CD8-positive, alpha-beta memory T cell (primary cell): ENCODE measurements at regions of chr19 and their contacts with region 1.

Region 1: DNA sequence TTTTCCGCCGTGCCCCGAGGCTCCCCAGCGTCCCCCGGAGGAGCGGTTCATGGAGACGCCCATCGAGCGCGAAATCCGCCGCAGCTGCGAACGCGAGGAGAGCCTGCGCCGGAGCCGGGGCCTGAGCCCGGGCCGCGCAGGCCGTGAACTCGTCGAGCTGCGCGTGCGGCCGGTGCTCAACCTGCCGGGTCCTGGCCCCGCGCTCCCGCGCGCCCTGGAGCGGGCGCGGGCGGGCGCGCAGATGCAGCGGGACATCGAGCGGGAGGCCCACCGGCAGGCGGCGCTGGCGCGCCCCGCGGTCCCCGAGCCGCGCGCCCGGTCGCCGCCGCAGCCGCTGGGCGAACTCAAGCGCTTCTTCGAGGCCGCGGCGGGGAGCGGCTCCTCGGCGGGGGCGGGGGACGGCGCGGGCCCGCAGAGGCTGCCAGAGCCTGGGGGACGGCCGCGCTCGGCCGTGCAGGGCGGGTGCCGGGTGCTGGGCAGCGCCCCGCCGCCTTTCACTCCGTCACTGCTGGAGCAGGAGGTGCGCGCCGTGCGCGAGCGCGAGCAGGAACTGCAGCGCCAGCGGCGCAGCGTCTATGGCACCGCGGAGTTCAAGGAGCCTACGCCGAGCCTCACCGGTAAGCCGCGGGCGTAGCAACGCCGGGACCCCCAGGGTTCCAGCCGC is 807 bp downstream of the MISP3 start:
- DNase-seq: peak; percentile 68 to 85 (median 80)
- H3K4me3 ChIP-seq: peak overlapping the region; percentile 73
- H3K4me3 Mint-ChIP-seq: peak overlapping the region; percentile 91 to 94 (median 93)
- H3K27ac ChIP-seq: peak overlapping the region; percentile 64
- H3K27ac Mint-ChIP-seq: peak overlapping the region in 7 of 8 donors; percentile 78 to 98 (median 88)
- H3K4me1 ChIP-seq: peaks cover 33% of the 10 kb centered on the region
- H3K4me1 Mint-ChIP-seq: peaks cover 7 to 29% (median 15%) of the 10 kb centered on the region in 3 donors
- H3K27me3 ChIP-seq: no peaks in the 10 kb centered on the region
- H3K27me3 Mint-ChIP-seq: no peaks in the 10 kb centered on the region

Region 2: GRCh38 chr19:13880059-13881043 is 193.0 kb before region 1 on chr19:
- CTCF ChIA-PET with region 1: interaction called, 28 read pairs
- POLR2A ChIA-PET with region 1: interaction called, 5 read pairs
- DNase-seq: peak; percentile 93 to 99 (median 98)
- H3K4me3 ChIP-seq: peak overlapping the region; percentile 52
- H3K4me3 Mint-ChIP-seq: peak overlapping the region; percentile 54 to 83 (median 72)
- H3K27ac ChIP-seq: peak overlapping the region; percentile 74
- H3K27ac Mint-ChIP-seq: peak overlapping the region in 7 of 8 donors; percentile 88 to 92 (median 91)
- H3K4me1 ChIP-seq: peaks cover 48% of the 10 kb centered on the region
- H3K4me1 Mint-ChIP-seq: peaks cover 33 to 49% (median 37%) of the 10 kb centered on the region in 3 donors
- H3K27me3 ChIP-seq: no peaks in the 10 kb centered on the region
- H3K27me3 Mint-ChIP-seq: no peaks in the 10 kb centered on the region

Region 3: DNA sequence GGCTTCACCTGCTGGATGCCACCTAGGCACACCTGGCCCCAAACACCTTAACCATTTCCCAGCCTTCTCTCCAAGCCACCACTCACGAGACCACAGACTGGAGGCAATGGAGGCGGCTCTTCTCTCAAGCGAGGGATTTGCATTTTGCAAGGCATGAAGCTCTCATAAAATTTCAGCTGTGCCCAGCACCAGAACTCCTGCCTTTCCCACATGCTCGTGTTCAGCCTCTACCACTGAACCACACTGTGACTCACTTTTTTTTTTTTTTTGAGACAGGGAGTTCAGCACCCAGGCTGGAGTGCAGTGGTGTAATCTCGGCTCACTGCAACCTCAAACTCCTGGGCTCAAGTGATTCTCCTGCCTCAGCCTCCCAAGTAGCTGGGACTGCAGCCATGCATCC is 185.9 kb before region 1 on chr19:
- CTCF ChIA-PET with region 1: interaction called, 28 read pairs
- POLR2A ChIA-PET with region 1: interaction called, 4 read pairs
- DNase-seq: peak in 1 of 5 donors; percentile 32
- H3K4me3 ChIP-seq: no peak overlapping the region
- H3K4me3 Mint-ChIP-seq: peak overlapping the region; percentile 21 to 78 (median 70)
- H3K27ac ChIP-seq: no peak overlapping the region
- H3K27ac Mint-ChIP-seq: peak overlapping the region; percentile 84 to 95 (median 92)
- H3K4me1 ChIP-seq: peaks cover 46% of the 10 kb centered on the region
- H3K4me1 Mint-ChIP-seq: peaks cover 24 to 50% (median 33%) of the 10 kb centered on the region in 3 donors
- H3K27me3 ChIP-seq: no peaks in the 10 kb centered on the region
- H3K27me3 Mint-ChIP-seq: no peaks in the 10 kb centered on the region

Region 4: GRCh38 chr19:14048443-14049153 is 24.8 kb before region 1 on chr19:
- CTCF ChIA-PET with region 1: interaction called, 11 read pairs
- POLR2A ChIA-PET with region 1: no interaction called
- DNase-seq: peak; percentile 51 to 82 (median 66)
- H3K4me3 ChIP-seq: no peak overlapping the region
- H3K4me3 Mint-ChIP-seq: no peak overlapping the region
- H3K27ac ChIP-seq: no peak overlapping the region
- H3K27ac Mint-ChIP-seq: peak overlapping the region; percentile 13 to 87 (median 76)
- H3K4me1 ChIP-seq: no peaks in the 10 kb centered on the region
- H3K4me1 Mint-ChIP-seq: peaks cover 0 to 9% (median 1%) of the 10 kb centered on the region in 3 donors
- H3K27me3 ChIP-seq: no peaks in the 10 kb centered on the region
- H3K27me3 Mint-ChIP-seq: no peaks in the 10 kb centered on the region

Region 5: DNA sequence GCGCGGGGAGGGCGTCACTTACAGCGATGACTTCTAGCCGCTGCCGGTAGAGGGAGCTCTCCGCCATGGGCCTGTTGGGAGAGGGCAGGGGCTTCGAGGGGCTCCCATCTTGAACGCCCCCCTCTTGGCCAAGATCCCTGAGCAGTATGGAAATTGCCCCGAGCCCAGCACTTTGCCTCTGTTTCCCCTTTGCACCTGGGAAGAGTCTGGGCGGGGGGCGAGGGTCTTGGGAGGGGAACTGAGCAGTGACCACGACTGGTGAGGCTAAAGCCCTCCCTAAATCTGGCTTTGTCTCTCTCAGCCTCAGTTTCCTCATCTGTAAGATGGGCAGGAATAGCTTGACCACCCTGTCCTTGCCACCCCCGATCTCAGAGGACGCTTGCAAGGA is 14.3 kb before region 1 on chr19:
- CTCF ChIA-PET with region 1: interaction called, 67 read pairs
- POLR2A ChIA-PET with region 1: no interaction called
- DNase-seq: peak; percentile 33 to 62 (median 43)
- H3K4me3 ChIP-seq: no peak overlapping the region
- H3K4me3 Mint-ChIP-seq: peak overlapping the region in 6 of 7 donors; percentile 31 to 78 (median 60)
- H3K27ac ChIP-seq: no peak overlapping the region
- H3K27ac Mint-ChIP-seq: peak overlapping the region in 2 of 8 donors; percentile 21 to 42
- H3K4me1 ChIP-seq: peaks cover 17% of the 10 kb centered on the region
- H3K4me1 Mint-ChIP-seq: peaks cover 11 to 25% (median 11%) of the 10 kb centered on the region in 3 donors
- H3K27me3 ChIP-seq: peaks cover 16% of the 10 kb centered on the region
- H3K27me3 Mint-ChIP-seq: peaks cover 18 to 36% of the 10 kb centered on the region in 2 donors

Region 6: DNA sequence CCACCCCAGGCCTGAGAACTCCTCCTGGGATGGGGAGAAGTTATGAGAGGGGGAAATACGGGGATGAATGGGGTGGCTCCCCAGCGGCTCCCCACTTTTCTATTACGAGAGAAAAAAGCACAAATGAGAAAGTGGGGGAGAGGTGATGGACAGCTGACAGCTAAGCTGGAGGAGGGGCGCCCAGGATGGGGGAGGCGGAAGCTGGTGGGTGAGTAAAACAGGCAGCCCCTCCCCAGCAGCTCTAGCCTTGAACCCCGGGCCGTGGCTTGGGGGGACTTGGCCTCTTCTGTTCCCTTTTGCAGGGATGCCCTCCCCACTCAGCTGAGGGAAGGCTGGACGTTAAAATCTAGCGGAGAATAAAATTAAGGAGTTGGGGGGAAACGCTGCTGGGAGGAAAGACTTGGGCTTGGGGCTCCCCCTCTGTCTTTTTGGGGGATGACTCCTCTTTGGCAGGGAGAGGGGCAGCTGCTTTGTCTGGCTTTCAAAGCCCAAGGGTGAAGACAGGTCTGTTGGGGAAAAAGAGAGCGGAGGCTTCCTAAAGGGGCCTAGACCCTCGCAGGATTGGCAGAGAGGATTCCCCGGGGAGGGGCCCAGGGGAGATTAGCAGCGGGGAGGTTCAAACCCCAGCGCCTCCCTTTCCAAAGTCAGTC is 18.5 kb after region 1 on chr19:
- CTCF ChIA-PET with region 1: interaction called, 6 read pairs
- POLR2A ChIA-PET with region 1: interaction called, 17 read pairs
- DNase-seq: peak in 1 of 5 donors; percentile 9
- H3K4me3 ChIP-seq: peak overlapping the region; percentile 89
- H3K4me3 Mint-ChIP-seq: peak overlapping the region; percentile 88 to 100 (median 99)
- H3K27ac ChIP-seq: peak overlapping the region; percentile 59
- H3K27ac Mint-ChIP-seq: peak overlapping the region; percentile 94 to 99 (median 98)
- H3K4me1 ChIP-seq: peaks cover 14% of the 10 kb centered on the region
- H3K4me1 Mint-ChIP-seq: peaks cover 10 to 24% (median 13%) of the 10 kb centered on the region in 3 donors
- H3K27me3 ChIP-seq: no peaks in the 10 kb centered on the region
- H3K27me3 Mint-ChIP-seq: peaks cover 0 to 4% of the 10 kb centered on the region in 2 donors

Region 7: GRCh38 chr19:14117668-14118164 is 44.3 kb after region 1 on chr19 and contains the start of gene PRKACA:
- CTCF ChIA-PET with region 1: interaction called, 28 read pairs
- POLR2A ChIA-PET with region 1: interaction called, 6 read pairs
- DNase-seq: peak; percentile 97 to 99 (median 99)
- H3K4me3 ChIP-seq: peak within 1 kb of the TSS; percentile 60
- H3K4me3 Mint-ChIP-seq: peak within 1 kb of the TSS; percentile 92 to 98 (median 96)
- H3K27ac ChIP-seq: peak within 1 kb of the TSS; percentile 85
- H3K27ac Mint-ChIP-seq: peak within 1 kb of the TSS; percentile 96 to 100 (median 99)
- H3K4me1 ChIP-seq: peaks cover 34% of the 10 kb centered on the region
- H3K4me1 Mint-ChIP-seq: peaks cover 35 to 52% (median 35%) of the 10 kb centered on the region in 3 donors
- H3K27me3 ChIP-seq: no peaks in the 10 kb centered on the region
- H3K27me3 Mint-ChIP-seq: peaks cover 0 to 4% of the 10 kb centered on the region in 2 donors
- total RNA-seq, gene PRKACA: 77.3 to 81.0 TPM